HepG2 (cell line): ENCODE measurements at regions of chr1 and their contacts with region 1.

Region 1: GRCh38 chr1:236064674-236065508 is at the start of gene NID1:
- DNase-seq: peak; percentile 73
- ATAC-seq: peak; percentile 80
- H3K4me3 ChIP-seq: peak within 1 kb of the TSS; percentile 70 to 94 (median 81)
- H3K27ac ChIP-seq: peak within 1 kb of the TSS; percentile 95
- H3K4me1 ChIP-seq: peaks cover 66% of the 10 kb centered on the region
- H3K27me3 ChIP-seq: no peaks in the 10 kb centered on the region
- CTCF ChIP-seq: peak; percentile 59
- EP300 ChIP-seq: no peak; a peak in 1 of 4 replicates
- POLR2A ChIP-seq: peak; percentile 71 to 77
- RAD21 ChIP-seq: peak; percentile 50
- total RNA-seq, gene NID1: 29.3 and 50.2 TPM in 2 replicates

Region 2: GRCh38 chr1:236039740-236040685 is 24.9 kb before region 1 on chr1:
- CTCF ChIA-PET with region 1: no interaction called
- POLR2A ChIA-PET with region 1: interaction called, 11 read pairs
- in situ Hi-C with region 1: no loop called
- intact Hi-C with region 1: loop called (anchors 1 kb)
- DNase-seq: peak; percentile 93
- ATAC-seq: peak; percentile 99
- H3K4me3 ChIP-seq: peak overlapping the region in 1 of 3 experiments; percentile 35; a peak in 1 of 6 replicates
- H3K27ac ChIP-seq: peak overlapping the region; percentile 61
- H3K4me1 ChIP-seq: peaks cover 20% of the 10 kb centered on the region
- H3K27me3 ChIP-seq: no peaks in the 10 kb centered on the region; a peak in 1 of 5 replicates
- CTCF ChIP-seq: 0 out of 2 replicates have a peak, but pooled peaks have one; percentile 7
- EP300 ChIP-seq: peak in 1 of 2 experiments; percentile 85; a peak in 2 of 4 replicates
- POLR2A ChIP-seq: no peak
- RAD21 ChIP-seq: peak; percentile 16; the same call in 1 of the 2 replicates

Region 3: DNA sequence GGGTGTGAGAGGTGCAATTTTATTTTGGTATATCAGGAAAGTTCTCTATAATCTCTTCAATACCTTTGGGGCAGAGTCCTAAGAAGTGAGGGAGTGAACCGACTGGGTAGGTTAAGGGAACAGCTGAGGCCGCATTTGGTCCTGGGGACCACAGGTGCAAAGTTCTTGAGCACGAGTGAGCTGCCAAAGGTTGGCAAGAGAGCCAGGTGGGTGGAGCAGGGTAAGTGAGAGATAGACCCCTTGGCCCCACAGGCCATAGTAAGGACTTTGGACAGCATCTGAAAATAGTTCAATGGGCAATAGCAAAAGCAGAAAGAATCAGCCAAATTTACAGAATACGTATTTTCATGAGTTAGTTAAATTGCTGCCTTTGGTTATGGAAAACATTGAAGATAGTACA is 11.0 kb after region 1 on chr1:
- CTCF ChIA-PET with region 1: no interaction called
- POLR2A ChIA-PET with region 1: interaction called, 10 read pairs
- in situ Hi-C with region 1: no loop called
- intact Hi-C with region 1: no loop called
- DNase-seq: peak; percentile 48
- ATAC-seq: peak; percentile 73
- H3K4me3 ChIP-seq: no peak overlapping the region
- H3K27ac ChIP-seq: peak overlapping the region; percentile 3
- H3K4me1 ChIP-seq: peaks cover 41% of the 10 kb centered on the region
- H3K27me3 ChIP-seq: peaks cover 0 to 6% of the 10 kb centered on the region in 2 experiments; a peak in 1 of 5 replicates
- CTCF ChIP-seq: no peak
- EP300 ChIP-seq: peak in 1 of 2 experiments; percentile 67; a peak in 1 of 4 replicates
- POLR2A ChIP-seq: no peak
- RAD21 ChIP-seq: no peak

Region 4: GRCh38 chr1:236090741-236091147 is 25.9 kb after region 1 on chr1:
- CTCF ChIA-PET with region 1: no interaction called
- POLR2A ChIA-PET with region 1: no interaction called
- in situ Hi-C with region 1: no loop called
- intact Hi-C with region 1: loop called (anchors 2 kb)
- DNase-seq: no peak
- ATAC-seq: peak; percentile 35
- H3K4me3 ChIP-seq: no peak overlapping the region
- H3K27ac ChIP-seq: no peak overlapping the region
- H3K4me1 ChIP-seq: peaks cover 22% of the 10 kb centered on the region
- H3K27me3 ChIP-seq: no peaks in the 10 kb centered on the region
- CTCF ChIP-seq: no peak
- EP300 ChIP-seq: no peak
- POLR2A ChIP-seq: no peak
- RAD21 ChIP-seq: no peak